HepG2 (cell line): ENCODE measurements at regions of chr2 and their contacts with region 1.

Region 1: GRCh38 chr2:128232965-128233789 is 85.5 kb downstream of the HS6ST1 start:
- DNase-seq: peak; percentile 78
- ATAC-seq: peak; percentile 96
- H3K4me3 ChIP-seq: peak overlapping the region; percentile 71 to 89 (median 72)
- H3K27ac ChIP-seq: peak overlapping the region; percentile 78
- H3K4me1 ChIP-seq: peaks cover 38% of the 10 kb centered on the region
- H3K27me3 ChIP-seq: no peaks in the 10 kb centered on the region
- CTCF ChIP-seq: peak; percentile 99
- EP300 ChIP-seq: peak in 1 of 2 experiments; percentile 20; a peak in 1 of 4 replicates
- POLR2A ChIP-seq: peak; percentile 45 to 64; a peak in 2 of 4 replicates
- RAD21 ChIP-seq: peak; percentile 96

Region 2: DNA sequence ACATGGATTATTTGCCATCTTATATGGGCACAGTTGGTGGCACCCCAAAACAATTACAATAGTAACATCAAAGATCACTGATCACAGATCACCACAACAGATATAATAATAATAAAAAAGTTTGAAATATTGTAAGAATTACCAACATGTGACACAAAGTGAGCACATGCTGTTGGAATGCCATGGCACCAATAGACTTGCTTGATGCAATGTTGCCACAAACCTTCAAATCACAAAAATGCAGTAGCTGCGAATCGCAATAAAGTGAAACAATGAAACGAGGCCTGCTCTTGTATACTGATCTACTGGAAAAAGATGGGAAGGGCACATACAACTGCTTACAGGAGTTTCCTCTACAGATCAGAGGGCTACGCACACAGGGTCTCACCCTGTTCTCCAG is 315.3 kb before region 1 on chr2:
- CTCF ChIA-PET with region 1: no interaction called
- POLR2A ChIA-PET with region 1: no interaction called
- in situ Hi-C with region 1: no loop called
- intact Hi-C with region 1: no loop called
- DNase-seq: no peak
- ATAC-seq: no peak
- H3K4me3 ChIP-seq: no peak overlapping the region
- H3K27ac ChIP-seq: no peak overlapping the region
- H3K4me1 ChIP-seq: peaks cover 21% of the 10 kb centered on the region
- H3K27me3 ChIP-seq: no peaks in the 10 kb centered on the region
- CTCF ChIP-seq: no peak
- EP300 ChIP-seq: no peak
- POLR2A ChIP-seq: no peak
- RAD21 ChIP-seq: no peak

Region 3: GRCh38 chr2:128062571-128062970 is 170.6 kb before region 1 on chr2:
- CTCF ChIA-PET with region 1: interaction called, 6 read pairs
- POLR2A ChIA-PET with region 1: no interaction called
- in situ Hi-C with region 1: no loop called
- intact Hi-C with region 1: loop called (anchors 1 kb)
- DNase-seq: no peak
- ATAC-seq: no peak
- H3K4me3 ChIP-seq: no peak overlapping the region
- H3K27ac ChIP-seq: no peak overlapping the region
- H3K4me1 ChIP-seq: peaks cover 50% of the 10 kb centered on the region
- H3K27me3 ChIP-seq: no peaks in the 10 kb centered on the region; a peak in 1 of 5 replicates
- CTCF ChIP-seq: no peak
- EP300 ChIP-seq: no peak
- POLR2A ChIP-seq: no peak
- RAD21 ChIP-seq: no peak

Region 4: DNA sequence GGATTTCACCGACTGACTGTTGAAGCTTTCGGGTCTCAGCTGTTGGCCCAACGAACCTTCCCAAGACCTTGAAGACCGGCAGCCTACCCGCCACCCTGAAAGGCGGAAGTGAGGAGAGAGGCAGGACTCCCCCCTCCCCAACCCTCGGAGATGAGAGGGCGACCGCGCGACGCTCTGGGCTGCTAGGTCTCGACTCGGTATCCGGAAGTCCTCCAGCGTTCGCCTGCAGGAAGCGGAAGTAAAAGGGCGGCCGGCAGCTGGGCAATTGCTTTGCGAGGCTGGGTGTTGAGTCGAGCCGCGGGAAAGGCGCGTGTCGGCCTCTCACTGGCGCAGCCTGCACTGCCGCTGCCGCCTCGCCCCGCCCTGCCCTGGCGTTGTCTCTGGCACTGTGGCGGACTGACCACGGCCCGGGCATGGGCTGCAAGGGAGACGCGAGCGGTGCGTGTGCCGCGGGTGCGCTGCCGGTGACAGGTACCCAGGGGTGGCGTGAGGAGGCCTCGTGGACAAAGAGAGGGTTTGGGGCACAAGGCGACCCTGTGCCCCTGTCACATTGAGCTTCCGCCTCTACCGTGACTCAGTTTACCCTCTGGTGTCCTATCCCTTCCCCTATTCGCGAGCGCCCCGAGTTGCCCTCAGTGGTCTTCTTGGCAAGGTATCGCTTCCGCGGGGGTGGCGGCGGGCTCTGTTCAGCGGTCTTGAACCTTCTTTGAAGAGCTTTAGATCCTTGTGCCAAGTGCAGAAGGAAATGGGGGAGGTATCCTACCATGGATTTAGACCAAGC is 142.0 kb before region 1 on chr2 and contains the start of gene UGGT1:
- CTCF ChIA-PET with region 1: no interaction called
- POLR2A ChIA-PET with region 1: no interaction called
- in situ Hi-C with region 1: no loop called
- intact Hi-C with region 1: loop called (anchors 5 kb)
- DNase-seq: peak; percentile 97
- ATAC-seq: peak; percentile 99
- H3K4me3 ChIP-seq: peak within 1 kb of the TSS; percentile 92 to 96 (median 93)
- H3K27ac ChIP-seq: peak within 1 kb of the TSS; percentile 78
- H3K4me1 ChIP-seq: peaks cover 53% of the 10 kb centered on the region
- H3K27me3 ChIP-seq: no peaks in the 10 kb centered on the region; a peak in 1 of 5 replicates
- CTCF ChIP-seq: peak; percentile 48
- EP300 ChIP-seq: peak; percentile 66 to 74; a peak in 3 of 4 replicates
- POLR2A ChIP-seq: peak; percentile 87 to 94
- RAD21 ChIP-seq: no peak; the same call in 1 of the 2 replicates
- total RNA-seq, gene UGGT1: 56.4 and 83.2 TPM in 2 replicates

Region 5: GRCh38 chr2:128172191-128172590 is 61.0 kb before region 1 on chr2:
- CTCF ChIA-PET with region 1: interaction called, 17 read pairs
- POLR2A ChIA-PET with region 1: no interaction called
- in situ Hi-C with region 1: loop called (anchors 10 kb)
- intact Hi-C with region 1: no loop called
- DNase-seq: peak; percentile 55
- ATAC-seq: peak; percentile 14; the same call in 2 of the 3 replicates
- H3K4me3 ChIP-seq: no peak overlapping the region
- H3K27ac ChIP-seq: peak overlapping the region; percentile 91
- H3K4me1 ChIP-seq: peaks cover 80% of the 10 kb centered on the region
- H3K27me3 ChIP-seq: no peaks in the 10 kb centered on the region
- CTCF ChIP-seq: peak; percentile 85
- EP300 ChIP-seq: 0 out of 4 replicates have a peak, but pooled peaks of 1 of the 2 experiments have one; percentile 6
- POLR2A ChIP-seq: no peak
- RAD21 ChIP-seq: no peak

Region 6: DNA sequence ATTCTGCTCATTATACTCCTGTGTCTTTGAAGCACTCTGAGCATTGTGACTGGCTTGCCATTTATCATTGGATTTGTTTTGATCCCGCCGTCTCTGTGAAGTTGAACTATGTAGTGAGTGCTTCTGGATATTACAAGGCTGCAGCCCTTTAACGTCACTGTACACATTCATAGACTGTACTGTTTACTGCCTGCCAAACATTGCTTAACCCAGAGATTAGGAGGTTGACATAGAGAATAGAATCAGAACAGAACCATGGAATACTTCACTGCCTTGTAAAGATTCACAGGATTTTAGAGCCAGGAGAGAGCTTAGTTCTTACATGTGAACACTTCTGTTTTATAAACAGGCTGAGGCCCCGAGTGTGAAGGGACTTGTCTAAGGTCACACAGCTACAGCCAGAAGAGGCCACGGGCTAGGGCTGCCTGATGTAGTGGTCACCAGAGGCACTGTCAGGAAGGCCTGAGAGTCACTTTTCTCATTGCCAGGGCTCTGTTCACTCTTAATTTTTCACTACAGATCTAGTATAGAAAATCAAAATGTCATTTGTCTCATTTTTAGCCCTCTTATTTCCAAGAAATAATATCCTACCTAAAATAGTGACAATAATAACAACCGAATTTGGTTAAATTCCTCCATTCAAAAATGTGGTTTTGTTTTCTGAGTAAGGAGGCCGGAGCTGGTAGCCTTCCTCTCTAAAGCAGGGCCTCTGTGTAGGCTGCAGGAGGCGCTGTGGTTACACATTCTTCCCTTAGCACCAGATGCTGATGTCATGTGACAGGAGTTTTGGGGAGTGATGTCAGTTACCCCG is 54.3 kb before region 1 on chr2:
- CTCF ChIA-PET with region 1: interaction called, 30 read pairs
- POLR2A ChIA-PET with region 1: interaction called, 5 read pairs
- in situ Hi-C with region 1: loop called (anchors 10 kb)
- intact Hi-C with region 1: loop called (anchors 1 kb)
- DNase-seq: peak; percentile 100
- ATAC-seq: peak; percentile 98
- H3K4me3 ChIP-seq: peak overlapping the region in 2 of 3 experiments; percentile 6 to 36; a peak in 2 of 6 replicates
- H3K27ac ChIP-seq: peak overlapping the region; percentile 93
- H3K4me1 ChIP-seq: peaks cover 50% of the 10 kb centered on the region
- H3K27me3 ChIP-seq: no peaks in the 10 kb centered on the region
- CTCF ChIP-seq: peak; percentile 91
- EP300 ChIP-seq: peak; percentile 93 to 99; a peak in 3 of 4 replicates
- POLR2A ChIP-seq: peak in 1 of 2 experiments; percentile 22; a peak in 1 of 4 replicates
- RAD21 ChIP-seq: peak; percentile 83

Region 7: DNA sequence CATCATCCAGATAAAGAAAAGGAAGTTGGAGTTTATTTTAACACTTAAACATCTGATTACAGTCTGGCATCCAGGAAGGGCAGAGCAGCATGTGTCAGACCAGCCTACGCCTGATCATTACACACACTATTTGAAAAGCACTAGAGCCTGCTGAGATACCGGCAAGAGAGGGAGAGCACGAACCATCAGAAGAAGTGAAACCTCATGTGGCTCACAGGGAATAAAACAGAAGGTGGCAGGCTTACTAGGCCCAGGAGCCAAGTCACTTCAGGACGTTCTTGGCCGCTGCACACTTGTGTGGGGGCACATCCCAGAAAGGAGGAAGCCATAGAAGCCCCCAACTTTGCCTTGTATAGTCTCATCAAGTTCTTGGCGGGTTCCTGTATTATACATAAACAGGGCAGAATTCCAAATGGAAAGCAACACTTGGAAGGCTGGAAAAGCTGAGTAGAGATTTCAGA is 36.7 kb before region 1 on chr2:
- CTCF ChIA-PET with region 1: no interaction called
- POLR2A ChIA-PET with region 1: interaction called, 4 read pairs
- in situ Hi-C with region 1: no loop called
- intact Hi-C with region 1: loop called (anchors 5 kb)
- DNase-seq: peak; percentile 47
- ATAC-seq: peak; percentile 57
- H3K4me3 ChIP-seq: no peak overlapping the region
- H3K27ac ChIP-seq: peak overlapping the region; percentile 88
- H3K4me1 ChIP-seq: peaks cover 43% of the 10 kb centered on the region
- H3K27me3 ChIP-seq: no peaks in the 10 kb centered on the region
- CTCF ChIP-seq: no peak
- EP300 ChIP-seq: no peak
- POLR2A ChIP-seq: 0 out of 4 replicates have a peak, but pooled peaks of 1 of the 2 experiments have one; percentile 40
- RAD21 ChIP-seq: no peak

Region 8: GRCh38 chr2:129061069-129061768 is 828.0 kb after region 1 on chr2:
- CTCF ChIA-PET with region 1: no interaction called
- POLR2A ChIA-PET with region 1: no interaction called
- in situ Hi-C with region 1: no loop called
- intact Hi-C with region 1: no loop called
- DNase-seq: no peak
- ATAC-seq: no peak
- H3K4me3 ChIP-seq: no peak overlapping the region
- H3K27ac ChIP-seq: no peak overlapping the region
- H3K4me1 ChIP-seq: no peaks in the 10 kb centered on the region
- H3K27me3 ChIP-seq: no peaks in the 10 kb centered on the region; a peak in 1 of 5 replicates
- CTCF ChIP-seq: no peak
- EP300 ChIP-seq: no peak
- POLR2A ChIP-seq: no peak
- RAD21 ChIP-seq: no peak